Naive thymus-derived CD4-positive, alpha-beta T cell (primary cell): ENCODE measurements at regions of chr21 and their contacts with region 1.

Region 1: GRCh38 chr21:26850108-26850643 is 5.0 kb upstream of the ADAMTS1 start:
- DNase-seq: peak in 2 of 9 donors; percentile 14 to 20
- ATAC-seq: no peak
- H3K4me3 ChIP-seq: no peak overlapping the region
- H3K4me3 Mint-ChIP-seq: no peak overlapping the region
- H3K27ac ChIP-seq: no peak overlapping the region
- H3K27ac Mint-ChIP-seq: no peak overlapping the region
- H3K4me1 ChIP-seq: peaks cover 3 to 11% of the 10 kb centered on the region in 2 donors
- H3K4me1 Mint-ChIP-seq: peaks cover 18 to 26% (median 20%) of the 10 kb centered on the region in 7 donors
- H3K27me3 ChIP-seq: peaks cover 0 to 14% of the 10 kb centered on the region in 2 donors
- H3K27me3 Mint-ChIP-seq: peaks cover 37 to 49% (median 42%) of the 10 kb centered on the region in 5 donors

Region 2: GRCh38 chr21:26961698-26962097 is 111.5 kb after region 1 on chr21:
- CTCF ChIA-PET with region 1: no interaction called
- POLR2A ChIA-PET with region 1: no interaction called
- intact Hi-C with region 1: loop called in 1 of 2 experiments (anchors 5 kb)
- DNase-seq: no peak
- ATAC-seq: no peak
- H3K4me3 ChIP-seq: no peak overlapping the region
- H3K4me3 Mint-ChIP-seq: no peak overlapping the region
- H3K27ac ChIP-seq: no peak overlapping the region
- H3K27ac Mint-ChIP-seq: no peak overlapping the region
- H3K4me1 ChIP-seq: no peaks in the 10 kb centered on the region
- H3K4me1 Mint-ChIP-seq: peaks cover 0 to 3% (median 0%) of the 10 kb centered on the region in 7 donors
- H3K27me3 ChIP-seq: no peaks in the 10 kb centered on the region
- H3K27me3 Mint-ChIP-seq: peaks cover 26 to 38% (median 30%) of the 10 kb centered on the region in 5 donors

Region 3: DNA sequence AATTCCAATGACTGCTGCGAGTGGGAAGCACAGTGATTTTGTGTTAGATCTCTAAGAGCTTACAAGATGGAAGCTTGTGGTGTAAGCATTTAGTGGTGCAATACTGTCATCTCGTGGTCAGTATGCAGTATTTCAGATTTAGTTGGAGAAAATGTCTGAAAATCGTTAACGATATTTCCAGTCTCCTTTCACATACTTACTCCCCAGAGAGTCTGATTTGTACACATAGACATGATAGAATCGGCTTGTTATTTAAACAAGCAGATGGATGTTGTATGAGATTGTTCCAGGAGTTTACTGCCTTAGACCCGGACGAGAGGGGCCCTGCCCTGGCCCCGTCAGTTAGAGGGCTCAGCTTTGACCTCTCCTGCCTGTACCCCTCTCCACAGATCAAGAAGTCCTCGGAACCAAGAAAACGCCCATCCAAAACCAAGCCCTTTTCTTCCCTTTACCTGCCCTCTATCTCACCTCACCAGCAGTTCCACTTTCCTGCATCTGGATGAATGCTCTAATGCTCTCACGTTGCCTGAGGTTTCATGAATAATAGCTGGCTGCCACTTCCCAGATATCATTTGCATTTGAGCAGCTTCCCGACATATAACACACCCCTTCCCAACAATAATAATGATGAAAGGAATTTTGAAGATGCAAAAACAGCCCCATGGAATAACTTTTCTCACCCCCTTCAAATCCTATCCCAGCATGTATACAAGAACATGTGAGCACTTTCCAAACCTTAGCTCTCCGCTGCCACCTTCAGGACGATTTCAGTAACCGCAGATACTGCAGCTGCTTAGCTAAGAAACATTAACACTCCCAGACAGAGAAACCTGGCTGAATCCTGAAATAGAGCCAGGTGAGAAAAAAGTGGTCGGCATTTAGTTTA is 1895.2 kb after region 1 on chr21:
- CTCF ChIA-PET with region 1: interaction called, 23 read pairs
- POLR2A ChIA-PET with region 1: no interaction called
- intact Hi-C with region 1: loop called (anchors 1 kb)
- DNase-seq: peak; percentile 31 to 69 (median 60)
- ATAC-seq: peak; percentile 91
- H3K4me3 ChIP-seq: peak overlapping the region; percentile 49
- H3K4me3 Mint-ChIP-seq: no peak overlapping the region
- H3K27ac ChIP-seq: no peak overlapping the region
- H3K27ac Mint-ChIP-seq: no peak overlapping the region
- H3K4me1 ChIP-seq: peaks cover 0 to 3% of the 10 kb centered on the region in 2 donors
- H3K4me1 Mint-ChIP-seq: no peaks in the 10 kb centered on the region
- H3K27me3 ChIP-seq: no peaks in the 10 kb centered on the region
- H3K27me3 Mint-ChIP-seq: peaks cover 0 to 5% (median 0%) of the 10 kb centered on the region in 5 donors